AG04449 (cell line): ENCODE measurements at regions of chr22 and their contacts with region 1.

Region 1: GRCh38 chr22:20013382-20013871 is 3.2 kb downstream of the ARVCF start:
- DNase-seq: no peak
- H3K4me3 ChIP-seq: no peak overlapping the region
- CTCF ChIP-seq: peak; percentile 90

Region 2: GRCh38 chr22:19986410-19987341 is 26.8 kb before region 1 on chr22:
- CTCF ChIA-PET with region 1: interaction called, 45 read pairs
- POLR2A ChIA-PET with region 1: no interaction called
- DNase-seq: no peak
- H3K4me3 ChIP-seq: peak overlapping the region; percentile 64
- CTCF ChIP-seq: no peak

Region 3: GRCh38 chr22:20000624-20001314 is 12.7 kb before region 1 on chr22:
- CTCF ChIA-PET with region 1: interaction called, 11 read pairs
- POLR2A ChIA-PET with region 1: no interaction called
- DNase-seq: no peak
- H3K4me3 ChIP-seq: no peak overlapping the region
- CTCF ChIP-seq: no peak

Region 4: DNA sequence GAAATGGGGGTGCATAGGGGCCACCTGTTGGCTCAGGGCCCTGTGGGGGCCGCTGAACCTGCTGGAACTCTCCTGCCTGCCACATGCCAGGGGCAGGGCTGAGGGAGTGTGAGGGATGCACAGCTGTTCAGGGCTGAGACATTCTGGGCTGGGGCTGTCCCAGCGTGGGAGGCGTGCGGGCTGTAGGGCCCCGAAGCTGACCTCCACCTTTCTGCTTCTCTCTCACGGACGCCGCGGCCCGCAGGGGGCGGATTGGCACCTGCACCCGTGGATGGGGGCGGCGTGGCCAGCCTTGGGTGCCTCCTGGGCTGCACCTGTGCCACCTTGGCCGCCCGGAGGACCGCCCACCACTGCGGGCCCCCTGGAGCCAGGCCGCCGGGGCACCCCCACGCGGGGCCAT is 133.3 kb after region 1 on chr22:
- CTCF ChIA-PET with region 1: no interaction called
- POLR2A ChIA-PET with region 1: no interaction called
- DNase-seq: no peak
- H3K4me3 ChIP-seq: no peak overlapping the region
- CTCF ChIP-seq: no peak